Tibial artery (tissue), 4 donors: ENCODE measurements at regions of chr19 and their contacts with region 1.

Region 1: GRCh38 chr19:11446652-11447301 is 11.3 kb downstream of the PRKCSH start:
- DNase-seq: peak in 1 of 2 donors; percentile 32
- H3K4me3 ChIP-seq: no peak overlapping the region
- H3K27ac ChIP-seq: peak overlapping the region in 1 of 2 donors; percentile 19
- H3K4me1 ChIP-seq: peaks cover 0 to 4% (median 2%) of the 10 kb centered on the region in 4 donors
- H3K27me3 ChIP-seq: peaks cover 0 to 7% of the 10 kb centered on the region in 2 donors
- CTCF ChIP-seq: peak; percentile 68 to 83

Region 2: DNA sequence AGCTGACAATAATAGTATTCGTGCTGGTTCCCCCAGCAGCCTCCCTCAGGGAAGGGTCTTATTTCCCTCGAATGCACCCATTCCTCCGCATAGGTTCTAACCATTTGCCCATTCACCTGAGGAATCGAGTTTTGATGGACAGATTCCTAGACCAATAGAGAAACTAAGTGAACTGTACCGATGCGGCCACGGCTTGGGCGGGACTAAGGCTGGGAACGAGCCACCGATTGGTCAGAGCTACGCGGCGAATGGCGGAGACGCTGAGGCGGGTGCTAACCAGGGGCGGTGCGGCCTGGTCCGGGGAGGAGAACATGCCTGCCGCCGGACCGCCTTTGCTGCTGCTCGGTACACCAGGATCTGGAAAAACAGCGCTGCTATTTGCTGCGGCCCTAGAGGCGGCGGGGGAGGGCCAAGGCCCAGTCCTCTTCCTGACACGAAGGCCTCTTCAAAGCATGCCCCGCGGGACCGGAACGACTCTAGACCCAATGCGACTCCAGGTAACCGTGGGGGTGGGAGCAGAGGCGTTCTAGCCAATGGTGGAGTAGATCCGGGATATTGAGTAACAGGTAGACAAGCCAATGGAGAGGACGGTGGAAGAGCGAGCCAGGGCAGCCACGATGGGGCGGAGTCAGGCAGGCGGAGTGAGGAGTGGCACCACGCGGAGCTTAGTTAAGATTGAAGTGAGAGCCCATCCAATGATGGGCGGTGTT is 72.2 kb before region 1 on chr19 and contains the start of gene SWSAP1:
- intact Hi-C with region 1: loop called (anchors 10 kb)
- DNase-seq: peak; percentile 99
- H3K4me3 ChIP-seq: peak within 1 kb of the TSS; percentile 62 to 63
- H3K27ac ChIP-seq: peak within 1 kb of the TSS; percentile 90 to 94
- H3K4me1 ChIP-seq: peaks cover 0 to 46% (median 38%) of the 10 kb centered on the region in 4 donors
- H3K27me3 ChIP-seq: no peaks in the 10 kb centered on the region
- CTCF ChIP-seq: peak in 1 of 2 experiments; percentile 20